Activated CD4-positive, alpha-beta memory T cell treated with anti-CD3 and anti-CD28 coated beads for 36 hours (primary cell): ENCODE measurements at regions of chr16 and their contacts with region 1.

Region 1: DNA sequence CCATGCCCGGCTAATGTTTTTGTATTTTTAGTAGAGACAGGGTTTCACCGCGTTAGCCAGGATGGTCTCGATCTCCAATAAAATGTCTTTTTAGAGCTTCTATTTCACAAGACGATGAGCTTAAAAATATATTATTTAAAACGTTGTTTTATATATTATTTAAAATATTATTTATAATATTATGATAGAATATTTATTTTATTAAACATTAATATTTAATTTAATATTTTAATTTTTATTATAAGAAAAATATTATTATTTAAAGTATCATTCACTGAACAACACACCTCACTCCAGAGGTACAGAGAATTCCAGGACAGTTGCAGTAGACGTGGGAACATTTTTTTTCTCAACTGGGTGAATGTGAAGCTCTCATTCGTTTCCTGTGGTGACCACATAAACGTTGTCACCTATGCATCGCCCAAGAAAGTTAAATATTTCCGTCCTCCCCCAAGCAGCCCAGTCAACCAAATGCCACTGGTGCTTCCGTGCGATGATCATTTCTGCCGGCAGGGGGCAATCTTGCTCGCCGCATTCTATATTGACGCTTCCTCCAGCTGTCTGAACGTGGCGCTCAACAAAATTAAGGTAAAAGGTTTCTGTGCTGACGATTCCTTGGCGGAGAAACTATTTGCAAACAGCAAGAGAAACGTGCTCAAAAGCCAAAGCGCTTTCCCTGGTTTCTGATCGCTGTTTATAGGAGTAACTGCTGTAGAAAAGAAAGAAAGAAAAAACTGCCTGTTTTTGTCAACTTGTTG is 41.7 kb upstream of the PRSS54 start:
- DNase-seq: peak; percentile 92
- H3K4me3 Mint-ChIP-seq: no peak overlapping the region
- H3K27ac Mint-ChIP-seq: no peak overlapping the region
- H3K4me1 Mint-ChIP-seq: peaks cover 4% of the 10 kb centered on the region
- H3K27me3 Mint-ChIP-seq: peaks cover 5% of the 10 kb centered on the region

Region 2: DNA sequence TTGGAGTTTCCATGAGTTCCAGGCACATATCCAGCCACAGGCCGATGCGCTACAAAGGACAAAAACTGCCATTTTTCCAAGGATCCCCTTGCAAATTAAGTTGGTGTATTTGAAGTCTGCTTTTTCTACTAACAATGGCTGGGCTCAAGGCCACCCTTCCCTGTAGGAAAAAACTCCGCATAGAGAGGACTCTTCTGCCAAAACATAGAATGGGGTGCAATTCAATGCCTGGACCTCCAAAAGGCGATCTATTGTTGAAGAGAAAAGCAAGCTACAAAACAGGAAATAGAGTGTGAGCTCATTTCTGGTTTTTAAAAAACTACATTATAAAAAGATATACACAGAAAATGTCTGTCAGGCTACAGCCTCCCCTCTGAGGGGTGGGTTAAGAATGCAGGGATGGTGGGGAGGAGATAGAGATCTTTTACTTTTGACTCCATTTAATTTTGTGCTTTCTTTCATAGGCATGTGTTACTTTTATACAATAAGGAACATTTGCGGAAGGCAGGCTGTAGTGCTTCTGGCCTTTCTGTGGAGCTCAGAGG is 18.8 kb before region 1 on chr16:
- CTCF ChIA-PET with region 1: interaction called, 10 read pairs
- POLR2A ChIA-PET with region 1: no interaction called
- intact Hi-C with region 1: no loop called
- DNase-seq: no peak
- H3K4me3 Mint-ChIP-seq: no peak overlapping the region
- H3K27ac Mint-ChIP-seq: no peak overlapping the region
- H3K4me1 Mint-ChIP-seq: no peaks in the 10 kb centered on the region
- H3K27me3 Mint-ChIP-seq: peaks cover 10% of the 10 kb centered on the region

Region 3: GRCh38 chr16:58475091-58475619 is 138.6 kb after region 1 on chr16:
- CTCF ChIA-PET with region 1: interaction called, 10 read pairs
- POLR2A ChIA-PET with region 1: no interaction called
- intact Hi-C with region 1: no loop called
- DNase-seq: no peak
- H3K4me3 Mint-ChIP-seq: no peak overlapping the region
- H3K27ac Mint-ChIP-seq: no peak overlapping the region
- H3K4me1 Mint-ChIP-seq: no peaks in the 10 kb centered on the region
- H3K27me3 Mint-ChIP-seq: peaks cover 5% of the 10 kb centered on the region

Region 4: DNA sequence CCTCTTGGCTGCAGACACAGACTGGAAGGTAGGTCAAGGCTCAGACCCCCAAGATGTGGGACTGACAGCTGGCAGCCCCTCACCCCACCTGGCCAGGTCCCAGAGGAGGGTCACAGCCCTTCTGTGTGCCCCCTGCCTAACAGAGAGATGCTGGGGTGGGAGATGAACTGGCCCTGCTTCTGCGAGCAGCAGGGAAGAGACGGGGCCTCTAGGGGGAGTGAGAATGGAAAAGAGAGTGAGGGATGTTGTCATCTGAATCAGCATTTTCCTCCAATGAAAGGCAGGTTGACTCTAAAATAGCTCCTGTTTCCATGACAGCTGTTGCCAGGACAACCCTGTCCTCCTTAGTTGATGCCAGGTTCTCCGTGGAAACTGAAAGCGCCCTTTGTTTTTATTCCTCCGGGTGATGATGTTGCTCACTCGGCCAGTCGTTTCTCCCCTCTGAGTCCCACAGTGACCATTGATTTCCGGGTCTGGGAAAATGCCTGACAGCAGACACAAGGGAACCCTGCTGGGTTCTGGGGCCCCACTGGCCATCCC is 158.5 kb after region 1 on chr16:
- CTCF ChIA-PET with region 1: interaction called, 286 read pairs
- POLR2A ChIA-PET with region 1: no interaction called
- intact Hi-C with region 1: no loop called
- DNase-seq: peak; percentile 85
- H3K4me3 Mint-ChIP-seq: no peak overlapping the region
- H3K27ac Mint-ChIP-seq: no peak overlapping the region
- H3K4me1 Mint-ChIP-seq: peaks cover 15% of the 10 kb centered on the region
- H3K27me3 Mint-ChIP-seq: peaks cover 1% of the 10 kb centered on the region

Region 5: DNA sequence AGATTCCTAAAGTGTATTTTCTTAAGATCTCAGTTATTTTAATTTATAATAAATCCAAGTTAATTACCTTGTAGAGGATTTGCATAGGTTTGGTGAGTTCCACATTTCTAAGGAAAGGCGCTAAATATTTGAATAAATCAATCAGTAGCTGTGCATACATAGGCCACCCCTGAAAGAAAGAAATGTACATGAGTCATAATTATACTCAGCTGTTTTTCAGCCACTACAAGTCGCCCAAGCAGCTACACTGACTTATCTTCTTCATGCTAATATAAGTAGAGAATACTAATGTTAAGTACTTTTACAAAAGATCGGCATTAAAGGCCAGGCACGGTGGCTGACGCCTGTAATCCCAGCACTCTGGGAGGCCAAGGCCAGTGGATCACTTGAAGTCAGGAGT is 193.7 kb after region 1 on chr16:
- CTCF ChIA-PET with region 1: no interaction called
- POLR2A ChIA-PET with region 1: no interaction called
- intact Hi-C with region 1: no loop called
- DNase-seq: no peak
- H3K4me3 Mint-ChIP-seq: no peak overlapping the region
- H3K27ac Mint-ChIP-seq: no peak overlapping the region
- H3K4me1 Mint-ChIP-seq: no peaks in the 10 kb centered on the region
- H3K27me3 Mint-ChIP-seq: no peaks in the 10 kb centered on the region

Region 6: GRCh38 chr16:58755989-58756649 is 419.6 kb after region 1 on chr16:
- CTCF ChIA-PET with region 1: interaction called, 49 read pairs
- POLR2A ChIA-PET with region 1: no interaction called
- intact Hi-C with region 1: loop called (anchors 1 kb)
- DNase-seq: peak; percentile 88
- H3K4me3 Mint-ChIP-seq: no peak overlapping the region
- H3K27ac Mint-ChIP-seq: peak overlapping the region; percentile 1
- H3K4me1 Mint-ChIP-seq: peaks cover 8% of the 10 kb centered on the region
- H3K27me3 Mint-ChIP-seq: no peaks in the 10 kb centered on the region